ENCODE measurements at regions of chr17 and their contacts with region 1.

Region 1: GRCh38 chr17:35587074-35587971 is at the start of gene AP2B1:
- DNase-seq: peak; percentile 97
- ATAC-seq: peak; percentile 97
- H3K4me3 Mint-ChIP-seq: peak within 1 kb of the TSS; percentile 100
- H3K27ac Mint-ChIP-seq: peak within 1 kb of the TSS; percentile 100
- H3K4me1 Mint-ChIP-seq: peaks cover 32% of the 10 kb centered on the region
- H3K27me3 Mint-ChIP-seq: peaks cover 5% of the 10 kb centered on the region
- CTCF ChIP-seq: no peak
- total RNA-seq, gene AP2B1: 129 and 152 TPM in 2 replicates

Region 2: GRCh38 chr17:34980681-34981537 is 606.4 kb before region 1 on chr17:
- CTCF ChIA-PET with region 1: no interaction called
- POLR2A ChIA-PET with region 1: no interaction called
- intact Hi-C with region 1: loop called (anchors 5 kb)
- DNase-seq: peak; percentile 92
- ATAC-seq: peak; percentile 91
- H3K4me3 Mint-ChIP-seq: peak overlapping the region; percentile 88
- H3K27ac Mint-ChIP-seq: peak overlapping the region; percentile 87
- H3K4me1 Mint-ChIP-seq: peaks cover 32% of the 10 kb centered on the region
- H3K27me3 Mint-ChIP-seq: no peaks in the 10 kb centered on the region
- CTCF ChIP-seq: no peak

Region 3: GRCh38 chr17:35568541-35568940 is 18.8 kb before region 1 on chr17:
- CTCF ChIA-PET with region 1: no interaction called
- POLR2A ChIA-PET with region 1: interaction called, 7 read pairs
- intact Hi-C with region 1: loop called (anchors 1 kb)
- DNase-seq: no peak
- ATAC-seq: no peak
- H3K4me3 Mint-ChIP-seq: peak overlapping the region; percentile 96
- H3K27ac Mint-ChIP-seq: peak overlapping the region; percentile 93
- H3K4me1 Mint-ChIP-seq: peaks cover 25% of the 10 kb centered on the region
- H3K27me3 Mint-ChIP-seq: no peaks in the 10 kb centered on the region
- CTCF ChIP-seq: no peak

Region 4: GRCh38 chr17:35808962-35809854 is 221.9 kb after region 1 on chr17 and contains the start of gene TAF15:
- CTCF ChIA-PET with region 1: no interaction called
- POLR2A ChIA-PET with region 1: interaction called, 5 read pairs
- intact Hi-C with region 1: loop called (anchors 1 kb)
- DNase-seq: peak; percentile 91
- ATAC-seq: peak; percentile 88
- H3K4me3 Mint-ChIP-seq: peak within 1 kb of the TSS; percentile 93
- H3K27ac Mint-ChIP-seq: peak within 1 kb of the TSS; percentile 100
- H3K4me1 Mint-ChIP-seq: peaks cover 55% of the 10 kb centered on the region
- H3K27me3 Mint-ChIP-seq: no peaks in the 10 kb centered on the region
- CTCF ChIP-seq: no peak
- total RNA-seq, gene TAF15: 224 and 243 TPM in 2 replicates

Region 5: GRCh38 chr17:37276527-37276926 is 1689.2 kb after region 1 on chr17:
- CTCF ChIA-PET with region 1: no interaction called
- POLR2A ChIA-PET with region 1: no interaction called
- intact Hi-C with region 1: no loop called
- DNase-seq: no peak
- ATAC-seq: no peak
- H3K4me3 Mint-ChIP-seq: no peak overlapping the region
- H3K27ac Mint-ChIP-seq: no peak overlapping the region
- H3K4me1 Mint-ChIP-seq: no peaks in the 10 kb centered on the region
- H3K27me3 Mint-ChIP-seq: no peaks in the 10 kb centered on the region
- CTCF ChIP-seq: no peak

Measured in activated B cell treated with CpG ODN at 0.5 μM for 24 hours (primary cell).